ENCODE measurements at regions of chr20 and their contacts with region 1.

Region 1: GRCh38 chr20:44572541-44573500 is 9.6 kb upstream of the PKIG start:
- DNase-seq: peak; percentile 41 to 88 (median 81)
- H3K4me3 ChIP-seq: peak overlapping the region in 41 of 59 donors; percentile 2 to 56 (median 26)
- H3K27ac ChIP-seq: peak overlapping the region; percentile 77 to 97 (median 93)
- H3K27me3 ChIP-seq: no peaks in the 10 kb centered on the region
- CTCF ChIP-seq: peak in 2 of 56 donors; percentile 10 to 12

Region 2: DNA sequence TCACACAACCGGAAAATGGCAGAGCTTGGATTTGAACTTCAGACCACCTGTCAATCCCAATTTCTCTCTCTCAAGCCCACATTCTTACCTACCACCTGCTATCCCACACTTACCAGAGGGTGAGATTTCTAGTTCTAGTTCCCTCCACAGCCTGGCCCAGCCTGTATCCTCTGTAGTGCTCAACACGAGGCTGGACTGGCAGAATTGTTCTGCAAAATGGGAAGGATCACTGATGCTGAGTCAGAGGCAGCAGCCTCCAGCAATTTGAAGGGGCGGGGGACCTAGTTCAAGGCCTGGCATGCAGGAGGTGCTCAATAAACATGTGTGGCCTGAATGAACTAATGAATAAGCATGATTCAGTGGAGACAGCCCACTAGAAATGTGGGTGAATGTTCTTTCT is 150.7 kb before region 1 on chr20:
- intact Hi-C with region 1: no loop called
- DNase-seq: no peak
- H3K4me3 ChIP-seq: no peak overlapping the region
- H3K27ac ChIP-seq: no peak overlapping the region
- H3K27me3 ChIP-seq: peaks cover 0 to 6% (median 0%) of the 10 kb centered on the region in 45 donors
- CTCF ChIP-seq: no peak

Region 3: DNA sequence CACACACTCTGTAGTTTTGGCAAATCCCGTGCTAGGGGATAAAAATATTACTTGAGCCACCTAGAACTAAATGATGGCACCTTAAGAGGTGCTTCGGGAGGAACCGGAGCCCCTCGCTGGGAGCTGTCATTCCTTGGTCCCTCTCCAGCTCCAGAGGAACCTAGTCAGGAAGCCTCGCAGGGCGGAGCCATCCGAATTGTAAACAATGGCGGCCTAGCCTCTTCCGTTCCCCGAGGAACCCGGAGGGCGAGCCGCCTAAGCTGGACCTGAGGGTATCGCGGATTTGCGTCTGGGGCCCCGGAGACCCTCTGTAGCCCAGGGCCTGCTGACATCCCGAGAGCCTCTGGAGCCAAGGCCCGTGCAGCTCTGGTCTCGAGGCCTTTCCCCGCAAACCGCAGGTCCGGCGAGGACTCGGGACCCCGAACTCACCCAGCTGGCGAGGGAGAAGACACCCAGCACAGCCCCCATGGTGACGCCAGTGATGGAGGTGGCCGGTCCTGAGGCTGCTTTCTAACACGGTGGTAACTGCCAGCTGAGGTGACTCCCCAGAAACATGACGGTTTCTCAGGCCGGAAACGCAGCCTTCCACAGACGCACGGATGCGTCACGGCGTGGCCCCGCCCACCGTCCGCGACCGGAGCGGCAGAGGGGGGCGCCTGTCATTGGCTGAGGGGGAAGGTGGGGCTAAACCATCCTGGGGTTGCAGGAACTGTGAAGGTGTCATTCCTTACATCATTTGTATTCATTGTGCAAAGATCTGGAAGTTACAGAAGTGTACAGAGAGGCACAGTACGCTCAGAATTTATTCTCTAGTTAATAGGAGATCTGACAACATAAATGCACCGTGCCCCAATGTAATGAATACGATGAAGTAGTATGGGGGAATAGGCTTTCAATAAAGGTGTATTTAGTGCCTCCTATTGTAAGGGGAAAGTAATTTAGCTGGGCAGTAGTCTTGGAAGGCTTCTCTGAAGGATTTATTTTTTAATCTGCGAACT is 51.0 kb before region 1 on chr20 and contains the start of gene SERINC3:
- intact Hi-C with region 1: loop called in 1 of 2 experiments (anchors 2 kb)
- DNase-seq: peak; percentile 87 to 98 (median 96)
- H3K4me3 ChIP-seq: peak within 1 kb of the TSS; percentile 60 to 100 (median 96)
- H3K27ac ChIP-seq: peak within 1 kb of the TSS; percentile 78 to 100 (median 96)
- H3K27me3 ChIP-seq: no peaks in the 10 kb centered on the region
- CTCF ChIP-seq: peak in 29 of 56 donors; percentile 2 to 61 (median 29)
- total RNA-seq, gene SERINC3: 107 to 236 (median 191) TPM

Region 4: GRCh38 chr20:44532259-44532980 is 40.4 kb before region 1 on chr20:
- intact Hi-C with region 1: loop called in 1 of 2 experiments (anchors 5 kb)
- DNase-seq: no peak
- H3K4me3 ChIP-seq: peak overlapping the region; percentile 66 to 99 (median 87)
- H3K27ac ChIP-seq: peak overlapping the region in 58 of 59 donors; percentile 33 to 94 (median 84)
- H3K27me3 ChIP-seq: no peaks in the 10 kb centered on the region
- CTCF ChIP-seq: no peak

Region 5: GRCh38 chr20:44552950-44553908 is 19.6 kb before region 1 on chr20:
- intact Hi-C with region 1: loop called in 1 of 2 experiments (anchors 2 kb)
- DNase-seq: no peak
- H3K4me3 ChIP-seq: no peak overlapping the region
- H3K27ac ChIP-seq: peak overlapping the region in 58 of 59 donors; percentile 0 to 90 (median 72)
- H3K27me3 ChIP-seq: no peaks in the 10 kb centered on the region
- CTCF ChIP-seq: no peak

Region 6: DNA sequence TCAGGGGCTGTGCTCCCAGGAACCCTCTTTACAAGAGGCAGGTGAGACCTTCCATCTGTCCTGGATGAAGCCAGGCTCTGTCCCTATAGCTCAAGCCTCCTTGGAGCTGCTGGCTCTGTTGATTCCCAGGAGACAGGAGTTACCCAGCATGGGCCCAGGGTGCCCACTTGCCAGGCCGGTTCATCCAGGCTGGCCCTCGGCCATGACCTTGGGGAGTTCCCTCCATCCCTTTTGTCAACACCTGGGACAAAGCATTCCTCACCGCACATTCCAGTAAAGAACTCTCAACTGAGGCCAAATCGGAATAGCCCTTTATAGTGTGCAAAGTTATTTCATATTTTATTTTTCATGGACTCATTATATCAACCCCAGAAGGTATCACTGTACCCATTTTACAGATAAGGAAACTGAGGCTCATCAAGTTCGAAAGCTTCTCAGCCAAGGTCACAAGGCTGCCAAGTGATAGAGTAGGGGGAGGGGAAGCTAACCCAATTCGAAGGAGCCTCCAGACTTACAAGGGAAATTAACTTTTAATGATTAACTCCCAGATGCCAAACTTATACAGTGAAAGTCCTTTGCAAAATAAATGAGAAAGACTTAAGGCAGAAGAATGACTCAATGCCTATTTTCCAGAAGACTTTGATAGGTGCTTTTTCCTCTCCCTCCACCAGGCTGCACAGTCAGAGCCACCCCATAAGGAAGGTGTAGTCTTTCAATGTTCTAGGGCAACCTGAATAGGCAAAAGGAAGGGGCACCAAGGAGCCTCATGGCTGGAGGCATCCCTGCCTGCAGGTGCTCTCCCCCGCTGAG is 756.9 kb after region 1 on chr20:
- intact Hi-C with region 1: no loop called
- DNase-seq: no peak
- H3K4me3 ChIP-seq: no peak overlapping the region
- H3K27ac ChIP-seq: peak overlapping the region in 1 of 59 donors; percentile 71
- H3K27me3 ChIP-seq: no peaks in the 10 kb centered on the region
- CTCF ChIP-seq: no peak